AG04449 (cell line): ENCODE measurements at regions of chr7 and their contacts with region 1.

Region 1: GRCh38 chr7:30548762-30549344 is 44.2 kb upstream of the GGCT start:
- DNase-seq: no peak
- H3K4me3 ChIP-seq: no peak overlapping the region
- CTCF ChIP-seq: peak; percentile 74

Region 2: DNA sequence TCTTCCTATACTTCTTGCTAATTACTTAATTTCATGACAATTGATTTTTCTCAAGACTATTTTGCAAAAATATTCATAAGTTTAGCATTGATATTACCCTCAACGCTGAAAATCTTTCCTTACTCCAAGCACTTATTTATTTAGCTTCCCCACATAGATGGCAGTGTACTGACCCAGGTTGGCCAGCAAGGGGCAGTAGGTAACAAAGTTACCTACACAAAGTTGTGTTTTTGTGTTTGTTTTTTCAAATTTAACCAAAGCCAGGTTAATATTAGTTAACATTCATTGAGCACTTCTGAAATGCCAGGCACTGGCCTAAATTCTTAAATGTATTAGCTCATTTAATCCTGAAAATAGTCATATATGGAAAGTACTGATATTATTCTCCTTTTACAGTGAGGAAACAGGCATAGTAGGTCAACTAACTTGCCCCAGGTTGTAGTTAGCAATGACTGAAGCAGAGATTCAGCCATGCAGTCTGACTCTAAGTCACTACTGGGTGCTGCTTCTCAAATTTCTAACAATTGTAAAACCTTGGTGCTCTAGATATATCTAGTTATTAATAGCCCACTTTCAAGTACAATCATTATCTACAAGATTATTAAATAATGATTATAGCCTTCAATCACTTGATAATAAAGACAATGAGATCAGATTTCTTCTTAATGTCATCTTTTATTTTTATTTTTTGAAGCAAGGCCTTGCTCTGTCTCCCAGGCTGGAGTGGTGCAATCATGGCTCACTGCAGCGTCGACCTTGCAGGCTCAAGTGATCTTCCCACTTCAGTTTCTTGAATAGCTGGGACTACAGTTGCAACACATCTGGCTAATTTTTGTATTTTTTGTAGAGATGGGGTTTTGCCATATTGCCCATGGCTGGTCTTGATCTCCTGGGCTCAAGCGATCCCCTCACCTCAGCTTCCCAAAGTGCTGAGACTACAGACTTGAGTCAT is 38.5 kb before region 1 on chr7:
- CTCF ChIA-PET with region 1: interaction called, 44 read pairs
- POLR2A ChIA-PET with region 1: no interaction called
- DNase-seq: no peak
- H3K4me3 ChIP-seq: no peak overlapping the region
- CTCF ChIP-seq: peak; percentile 58

Region 3: DNA sequence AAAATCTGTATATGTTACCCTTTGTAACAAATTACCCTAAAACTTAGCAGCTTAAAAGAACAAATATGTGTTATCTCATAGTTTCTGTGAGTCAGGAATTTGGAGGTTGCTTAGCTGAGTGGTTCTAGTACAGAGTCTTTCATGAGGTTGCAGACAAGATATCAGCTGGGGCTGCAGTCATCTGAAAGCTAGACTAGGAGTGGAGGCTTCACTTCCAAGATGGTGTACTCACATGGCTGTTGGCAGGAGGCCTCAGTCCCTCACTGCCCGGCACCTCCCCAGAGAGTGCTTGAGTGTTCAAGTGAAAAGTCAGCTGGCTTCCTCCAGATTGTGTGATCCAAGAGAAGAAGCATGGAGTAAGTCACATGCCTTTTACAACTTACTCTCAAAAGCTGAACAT is 27.3 kb before region 1 on chr7:
- CTCF ChIA-PET with region 1: interaction called, 10 read pairs
- POLR2A ChIA-PET with region 1: no interaction called
- DNase-seq: peak; percentile 17
- H3K4me3 ChIP-seq: no peak overlapping the region
- CTCF ChIP-seq: no peak

Region 4: GRCh38 chr7:30531286-30531685 is 17.6 kb before region 1 on chr7:
- CTCF ChIA-PET with region 1: interaction called, 72 read pairs
- POLR2A ChIA-PET with region 1: no interaction called
- DNase-seq: no peak
- H3K4me3 ChIP-seq: no peak overlapping the region
- CTCF ChIP-seq: no peak